Mammary epithelial cell (primary cell): ENCODE measurements at regions of chr6 and their contacts with region 1.

Region 1: GRCh38 chr6:88982720-88983119 is 19.3 kb upstream of the RNGTT start:
- DNase-seq: peak; percentile 78
- H3K4me3 ChIP-seq: no peak overlapping the region
- H3K27ac ChIP-seq: no peak overlapping the region
- H3K4me1 ChIP-seq: no peaks in the 10 kb centered on the region
- H3K27me3 ChIP-seq: peaks cover 2% of the 10 kb centered on the region
- CTCF ChIP-seq: peak; percentile 66 to 71

Region 2: GRCh38 chr6:88761237-88762031 is 221.3 kb before region 1 on chr6:
- CTCF ChIA-PET with region 1: no interaction called
- dilution Hi-C with region 1: no loop called
- in situ Hi-C with region 1: no loop called
- intact Hi-C with region 1: no loop called
- DNase-seq: no peak
- H3K4me3 ChIP-seq: no peak overlapping the region
- H3K27ac ChIP-seq: no peak overlapping the region
- H3K4me1 ChIP-seq: no peaks in the 10 kb centered on the region
- H3K27me3 ChIP-seq: no peaks in the 10 kb centered on the region
- CTCF ChIP-seq: no peak

Region 3: DNA sequence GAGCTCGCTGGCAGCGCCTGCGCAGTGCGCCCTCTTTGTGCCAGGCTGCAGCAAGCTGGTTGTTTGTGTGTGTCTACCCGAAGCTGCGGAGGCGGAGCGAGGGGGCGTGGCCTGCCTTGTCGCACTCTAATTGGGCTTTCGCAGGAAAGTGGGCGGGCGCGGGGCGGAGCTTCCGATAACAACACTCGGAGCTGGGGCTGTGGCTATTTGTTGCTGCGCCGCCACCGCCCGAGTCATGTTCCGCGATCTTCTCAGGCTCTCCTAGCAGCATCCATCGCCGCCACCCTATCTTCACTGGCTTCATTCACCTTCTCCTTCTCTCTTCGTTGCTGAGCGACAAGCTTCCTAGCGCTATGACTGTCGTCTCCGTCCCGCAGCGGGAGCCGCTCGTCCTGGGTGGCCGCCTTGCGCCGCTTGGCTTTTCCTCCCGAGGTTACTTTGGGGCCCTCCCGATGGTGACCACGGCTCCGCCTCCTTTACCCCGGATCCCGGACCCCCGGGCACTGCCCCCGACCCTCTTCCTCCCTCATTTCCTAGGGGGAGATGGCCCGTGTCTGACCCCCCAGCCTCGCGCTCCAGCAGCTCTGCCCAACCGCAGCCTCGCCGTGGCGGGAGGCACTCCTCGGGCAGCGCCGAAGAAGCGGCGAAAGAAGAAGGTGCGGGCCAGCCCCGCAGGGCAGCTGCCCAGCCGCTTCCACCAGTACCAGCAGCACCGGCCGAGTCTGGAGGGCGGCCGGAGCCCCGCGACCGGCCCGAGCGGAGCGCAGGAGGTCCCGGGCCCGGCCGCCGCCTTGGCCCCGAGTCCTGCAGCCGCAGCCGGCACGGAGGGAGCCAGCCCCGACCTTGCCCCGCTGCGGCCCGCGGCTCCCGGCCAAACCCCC is 98.1 kb after region 1 on chr6 and contains the start of gene PNRC1:
- CTCF ChIA-PET with region 1: interaction called, 6 read pairs
- dilution Hi-C with region 1: loop called (anchors 5 kb)
- in situ Hi-C with region 1: loop called in 1 of 2 experiments (anchors 25 kb)
- intact Hi-C with region 1: loop called (anchors 1 kb)
- DNase-seq: peak; percentile 98
- H3K4me3 ChIP-seq: peak within 1 kb of the TSS; percentile 73 to 78 (median 76)
- H3K27ac ChIP-seq: peak within 1 kb of the TSS; percentile 98
- H3K4me1 ChIP-seq: peaks cover 23% of the 10 kb centered on the region
- H3K27me3 ChIP-seq: no peaks in the 10 kb centered on the region
- CTCF ChIP-seq: no peak
- total RNA-seq, gene PNRC1: 56.6 to 75.0 TPM

Region 4: DNA sequence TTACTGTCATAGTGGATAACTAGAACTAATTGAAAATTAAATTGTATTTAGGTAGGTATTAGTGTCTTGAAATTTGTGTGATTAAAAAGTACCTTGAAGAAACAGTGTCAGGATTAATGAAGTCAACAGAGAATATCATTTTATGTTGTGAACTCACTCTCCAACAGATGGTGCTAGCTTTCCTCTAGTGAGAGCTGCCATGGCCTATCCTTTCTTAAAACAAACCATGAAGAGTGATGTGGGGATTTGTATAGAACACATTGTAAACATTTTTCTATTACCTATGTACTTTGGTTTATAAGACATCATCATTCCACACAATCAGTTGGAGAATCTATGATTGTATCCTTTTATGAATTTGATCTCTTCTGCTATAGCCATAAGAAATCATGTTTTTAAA is 139.9 kb after region 1 on chr6:
- CTCF ChIA-PET with region 1: interaction called, 5 read pairs
- dilution Hi-C with region 1: no loop called
- in situ Hi-C with region 1: no loop called
- intact Hi-C with region 1: loop called (anchors 1 kb)
- DNase-seq: peak; percentile 27
- H3K4me3 ChIP-seq: no peak overlapping the region
- H3K27ac ChIP-seq: no peak overlapping the region
- H3K4me1 ChIP-seq: peaks cover 6% of the 10 kb centered on the region
- H3K27me3 ChIP-seq: peaks cover 5% of the 10 kb centered on the region
- CTCF ChIP-seq: peak; percentile 27 to 69

Region 5: DNA sequence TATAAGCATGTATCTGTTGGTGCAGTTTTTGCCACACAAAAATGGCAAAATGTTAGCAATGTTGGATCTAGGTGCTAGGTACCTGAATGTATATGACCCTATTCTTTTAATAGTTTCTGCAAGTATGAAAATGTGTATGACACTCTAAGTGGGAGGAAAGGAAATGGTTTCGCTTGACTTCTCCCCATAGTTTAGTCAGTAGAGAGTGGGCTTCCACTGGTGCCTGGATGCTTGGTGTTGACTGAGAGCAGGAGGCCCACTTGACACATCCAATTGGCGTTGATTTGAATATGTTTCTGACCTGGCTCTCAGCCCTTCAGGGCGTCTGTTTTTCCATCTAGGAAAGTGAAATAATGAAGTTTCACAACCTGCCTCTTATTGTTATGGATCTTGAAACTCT is 276.2 kb after region 1 on chr6:
- CTCF ChIA-PET with region 1: no interaction called
- dilution Hi-C with region 1: loop called (anchors 10 kb)
- in situ Hi-C with region 1: no loop called
- intact Hi-C with region 1: no loop called
- DNase-seq: no peak
- H3K4me3 ChIP-seq: no peak overlapping the region
- H3K27ac ChIP-seq: no peak overlapping the region
- H3K4me1 ChIP-seq: no peaks in the 10 kb centered on the region
- H3K27me3 ChIP-seq: peaks cover 2% of the 10 kb centered on the region
- CTCF ChIP-seq: no peak

Region 6: DNA sequence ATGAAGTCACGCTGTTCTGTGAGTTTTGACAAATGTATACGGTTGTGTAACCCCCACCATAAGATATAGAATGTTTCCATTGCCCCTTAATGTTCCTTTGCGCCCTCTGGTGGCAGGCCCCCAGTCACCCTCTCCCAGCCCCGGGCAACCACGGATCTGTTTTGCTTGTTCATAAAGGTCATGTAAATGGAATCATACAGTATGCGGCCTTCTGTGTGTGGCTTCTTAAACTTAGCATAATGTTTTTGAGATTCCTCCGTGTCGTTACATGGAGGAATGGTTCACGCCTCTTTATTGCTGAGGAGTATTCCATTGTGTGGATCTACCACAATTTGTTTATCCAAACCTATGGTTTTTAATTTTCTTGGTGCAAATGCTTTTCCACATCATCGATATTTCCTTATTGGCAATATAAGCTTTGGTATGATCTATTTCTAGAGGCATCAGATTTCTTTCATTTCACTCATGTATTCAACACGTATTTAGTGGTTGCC is 627.5 kb after region 1 on chr6:
- CTCF ChIA-PET with region 1: interaction called, 3 read pairs
- dilution Hi-C with region 1: no loop called
- in situ Hi-C with region 1: no loop called
- intact Hi-C with region 1: loop called (anchors 10 kb)
- DNase-seq: peak; percentile 21
- H3K4me3 ChIP-seq: no peak overlapping the region
- H3K27ac ChIP-seq: no peak overlapping the region
- H3K4me1 ChIP-seq: peaks cover 3% of the 10 kb centered on the region
- H3K27me3 ChIP-seq: no peaks in the 10 kb centered on the region
- CTCF ChIP-seq: peak; percentile 81 to 86